Endothelial cell of umbilical vein (primary cell): ENCODE measurements at regions of chr10 and their contacts with region 1.

Region 1: GRCh38 chr10:62816331-62817120 is at the start of gene EGR2:
- DNase-seq: peak; percentile 91
- H3K4me3 ChIP-seq: peak within 1 kb of the TSS; percentile 45 to 91 (median 51)
- H3K27ac ChIP-seq: peak within 1 kb of the TSS; percentile 32
- H3K4me1 ChIP-seq: peaks cover 24% of the 10 kb centered on the region
- H3K27me3 ChIP-seq: peaks cover 50 to 60% of the 10 kb centered on the region in 2 experiments
- CTCF ChIP-seq: no peak
- POLR2A ChIP-seq: no peak
- total RNA-seq, gene EGR2: 0.46 and 0.67 TPM in 2 replicates

Region 2: DNA sequence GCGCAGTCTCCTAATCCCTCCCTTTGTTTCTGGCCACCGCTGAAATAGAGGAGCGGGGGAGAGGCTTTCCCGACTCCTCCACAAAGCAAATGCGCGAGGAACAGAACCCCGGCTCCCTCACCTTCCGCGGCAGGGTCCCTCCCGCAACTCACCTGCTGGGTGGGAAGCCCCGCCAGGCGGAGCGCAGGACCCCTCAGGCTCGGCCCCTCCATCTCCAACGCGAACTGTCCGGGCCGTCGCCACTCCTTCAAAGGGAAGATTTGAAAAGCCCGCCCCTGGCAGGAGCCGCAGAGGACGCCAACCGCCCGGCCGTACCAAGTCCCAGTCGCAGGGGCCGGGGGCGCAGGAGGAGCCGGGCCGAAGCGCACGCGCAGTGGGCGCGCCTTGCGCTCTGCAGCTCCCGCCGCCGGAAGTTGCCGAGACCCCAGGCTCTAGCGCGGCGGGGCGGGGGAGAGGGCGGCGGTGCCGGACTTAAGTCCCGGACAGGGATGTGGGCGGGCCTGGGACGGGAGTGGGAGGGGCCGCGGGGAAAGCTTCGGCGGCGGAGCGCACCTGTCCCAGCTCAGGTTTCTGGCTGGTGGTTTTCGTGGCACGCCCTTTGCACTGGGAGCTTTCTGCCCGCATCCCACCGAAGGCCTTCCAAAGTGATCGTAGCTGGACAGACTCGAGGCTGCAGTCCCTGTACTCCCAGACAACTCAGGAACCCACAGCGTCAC is 548.0 kb before region 1 on chr10 and contains the start of gene RTKN2:
- CTCF ChIA-PET with region 1: interaction called, 3 read pairs
- POLR2A ChIA-PET with region 1: no interaction called
- dilution Hi-C with region 1: no loop called
- intact Hi-C with region 1: loop called (anchors 5 kb)
- DNase-seq: peak; percentile 85
- H3K4me3 ChIP-seq: peak within 1 kb of the TSS; percentile 53 to 73 (median 72)
- H3K27ac ChIP-seq: no peak within 1 kb of the TSS
- H3K4me1 ChIP-seq: peaks cover 11% of the 10 kb centered on the region
- H3K27me3 ChIP-seq: peaks cover 0 to 2% of the 10 kb centered on the region in 2 experiments
- CTCF ChIP-seq: no peak
- POLR2A ChIP-seq: no peak
- total RNA-seq, gene RTKN2: 4.8 and 5.5 TPM in 2 replicates

Region 3: GRCh38 chr10:62554632-62555199 is 261.8 kb before region 1 on chr10:
- CTCF ChIA-PET with region 1: interaction called, 5 read pairs
- POLR2A ChIA-PET with region 1: no interaction called
- dilution Hi-C with region 1: no loop called
- intact Hi-C with region 1: loop called (anchors 1 kb)
- DNase-seq: peak; percentile 13
- H3K4me3 ChIP-seq: no peak overlapping the region
- H3K27ac ChIP-seq: no peak overlapping the region
- H3K4me1 ChIP-seq: no peaks in the 10 kb centered on the region
- H3K27me3 ChIP-seq: no peaks in the 10 kb centered on the region
- CTCF ChIP-seq: peak; percentile 35 to 39
- POLR2A ChIP-seq: no peak

Region 4: GRCh38 chr10:62648921-62649320 is 167.6 kb before region 1 on chr10:
- CTCF ChIA-PET with region 1: interaction called, 10 read pairs
- POLR2A ChIA-PET with region 1: no interaction called
- dilution Hi-C with region 1: no loop called
- intact Hi-C with region 1: no loop called
- DNase-seq: no peak
- H3K4me3 ChIP-seq: no peak overlapping the region
- H3K27ac ChIP-seq: no peak overlapping the region
- H3K4me1 ChIP-seq: peaks cover 5% of the 10 kb centered on the region
- H3K27me3 ChIP-seq: no peaks in the 10 kb centered on the region
- CTCF ChIP-seq: no peak
- POLR2A ChIP-seq: no peak

Region 5: GRCh38 chr10:62661143-62661542 is 155.4 kb before region 1 on chr10:
- CTCF ChIA-PET with region 1: no interaction called
- POLR2A ChIA-PET with region 1: no interaction called
- dilution Hi-C with region 1: no loop called
- intact Hi-C with region 1: no loop called
- DNase-seq: no peak
- H3K4me3 ChIP-seq: no peak overlapping the region
- H3K27ac ChIP-seq: no peak overlapping the region
- H3K4me1 ChIP-seq: no peaks in the 10 kb centered on the region
- H3K27me3 ChIP-seq: no peaks in the 10 kb centered on the region
- CTCF ChIP-seq: no peak
- POLR2A ChIP-seq: no peak

Region 6: DNA sequence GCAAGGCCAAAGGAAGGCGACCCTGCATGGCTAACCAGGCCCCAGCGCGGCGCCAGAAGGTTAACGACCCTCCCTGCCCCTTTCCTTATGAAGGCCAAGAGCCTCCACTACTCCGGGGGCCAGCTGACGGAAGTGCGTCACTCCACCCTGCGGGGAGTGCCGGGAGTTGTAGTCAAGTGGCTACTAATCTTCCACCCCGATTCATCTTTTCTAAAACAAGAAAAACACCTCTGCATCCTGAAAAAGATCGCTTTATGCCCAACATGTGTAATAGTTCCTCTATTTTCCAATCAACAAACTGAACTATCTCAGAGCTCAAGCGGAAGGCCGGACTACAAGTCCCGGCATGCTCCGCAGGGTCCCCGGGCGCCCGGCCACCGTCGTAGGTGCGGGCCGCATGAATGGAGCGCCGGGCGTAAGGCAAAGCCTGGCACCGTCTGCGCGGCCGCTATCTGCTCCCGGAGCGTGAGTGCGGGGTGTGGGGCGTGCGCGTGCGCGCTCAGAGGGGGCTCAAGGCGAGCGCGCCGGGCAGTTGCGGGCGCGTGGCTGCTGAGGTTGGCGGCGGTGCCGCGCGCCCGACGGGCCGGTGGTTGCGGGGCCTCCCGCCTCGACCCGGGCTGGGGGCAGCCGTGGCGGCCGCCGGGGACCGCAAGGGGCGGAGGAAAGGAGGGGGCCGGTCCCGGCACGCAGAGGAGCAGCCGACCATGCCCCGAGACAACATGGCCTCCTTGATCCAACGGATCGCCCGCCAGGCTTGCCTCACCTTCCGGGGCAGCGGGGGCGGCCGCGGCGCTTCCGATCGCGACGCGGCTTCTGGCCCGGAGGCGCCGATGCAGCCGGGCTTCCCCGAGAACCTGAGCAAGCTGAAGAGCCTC is 11.9 kb before region 1 on chr10 and contains the start of gene ADO:
- CTCF ChIA-PET with region 1: interaction called, 36 read pairs
- POLR2A ChIA-PET with region 1: no interaction called
- dilution Hi-C with region 1: no loop called
- intact Hi-C with region 1: loop called (anchors 1 kb)
- DNase-seq: peak; percentile 85
- H3K4me3 ChIP-seq: peak within 1 kb of the TSS; percentile 45 to 73 (median 70)
- H3K27ac ChIP-seq: peak within 1 kb of the TSS; percentile 87
- H3K4me1 ChIP-seq: peaks cover 18% of the 10 kb centered on the region
- H3K27me3 ChIP-seq: peaks cover 10 to 12% of the 10 kb centered on the region in 2 experiments
- CTCF ChIP-seq: no peak
- POLR2A ChIP-seq: peak; percentile 51
- total RNA-seq, gene ADO: 14.1 and 14.5 TPM in 2 replicates

Region 7: GRCh38 chr10:63157845-63158624 is 341.5 kb after region 1 on chr10:
- CTCF ChIA-PET with region 1: interaction called, 13 read pairs
- POLR2A ChIA-PET with region 1: no interaction called
- dilution Hi-C with region 1: no loop called
- intact Hi-C with region 1: loop called (anchors 1 kb)
- DNase-seq: peak; percentile 74
- H3K4me3 ChIP-seq: no peak overlapping the region
- H3K27ac ChIP-seq: no peak overlapping the region
- H3K4me1 ChIP-seq: no peaks in the 10 kb centered on the region
- H3K27me3 ChIP-seq: no peaks in the 10 kb centered on the region
- CTCF ChIP-seq: peak; percentile 65 to 71
- POLR2A ChIP-seq: no peak

Region 8: DNA sequence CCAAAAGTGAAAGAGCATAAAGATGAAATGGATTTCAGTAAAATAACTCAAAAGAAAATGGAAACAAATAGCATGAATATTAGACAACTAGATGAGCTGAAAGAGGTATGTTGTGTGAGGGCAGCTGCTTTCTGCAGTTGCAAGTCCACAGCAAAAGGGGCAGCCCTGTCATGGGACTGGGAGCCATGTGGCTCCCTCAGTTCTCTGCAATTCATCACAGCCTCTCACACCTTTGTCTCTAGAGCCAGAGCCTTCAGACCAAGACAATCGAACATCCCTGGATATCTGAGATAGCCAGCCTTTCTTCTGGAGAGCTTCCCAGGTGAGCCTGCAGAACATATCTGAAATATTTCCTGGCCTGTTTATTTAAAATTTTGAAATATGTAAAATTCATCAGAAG is 1243.4 kb after region 1 on chr10:
- CTCF ChIA-PET with region 1: no interaction called
- POLR2A ChIA-PET with region 1: no interaction called
- dilution Hi-C with region 1: no loop called
- intact Hi-C with region 1: no loop called
- DNase-seq: no peak
- H3K4me3 ChIP-seq: no peak overlapping the region
- H3K27ac ChIP-seq: no peak overlapping the region
- H3K4me1 ChIP-seq: no peaks in the 10 kb centered on the region
- H3K27me3 ChIP-seq: no peaks in the 10 kb centered on the region
- CTCF ChIP-seq: no peak
- POLR2A ChIP-seq: no peak